ENCODE measurements at regions of chr11 and their contacts with region 1.

Region 1: DNA sequence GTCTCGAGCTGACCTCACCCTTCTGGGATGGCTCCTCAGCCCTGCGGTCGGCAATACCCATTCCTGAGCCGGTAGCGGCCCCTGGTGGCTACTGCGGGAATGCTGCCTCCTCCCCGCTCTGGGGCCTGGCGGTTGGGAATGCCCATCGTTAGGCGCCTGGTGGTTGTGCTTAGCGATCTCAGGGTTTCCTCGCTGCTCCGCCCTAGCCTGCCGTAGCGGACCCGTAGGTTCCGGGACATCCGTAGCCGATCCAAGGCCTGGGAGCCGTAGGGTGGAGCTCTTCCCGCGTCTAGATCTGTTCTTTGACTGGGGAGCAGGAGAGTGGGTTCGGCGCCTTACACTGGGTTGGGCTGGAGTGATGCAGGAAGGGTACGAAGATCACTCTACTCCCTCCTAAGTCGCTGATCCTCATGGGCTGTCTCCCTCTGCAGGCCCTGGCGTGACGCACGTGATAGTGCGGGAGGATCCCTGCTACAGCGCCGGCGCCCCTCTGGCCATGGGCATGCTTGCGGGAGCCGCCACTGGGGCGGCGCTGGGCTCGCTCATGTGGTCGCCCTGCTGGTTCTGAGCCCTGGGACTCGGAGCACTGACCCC is 14.8 kb downstream of the PLEKHB1 start:
- DNase-seq: peak; percentile 88
- ATAC-seq: peak; percentile 97
- H3K4me3 ChIP-seq: peak overlapping the region in 4 of 5 experiments; percentile 6 to 30 (median 22)
- H3K4me3 Mint-ChIP-seq: peak overlapping the region; percentile 68
- H3K27ac ChIP-seq: no peak overlapping the region
- H3K27ac Mint-ChIP-seq: no peak overlapping the region
- H3K4me1 ChIP-seq: peaks cover 9 to 10% of the 10 kb centered on the region in 2 donors
- H3K4me1 Mint-ChIP-seq: peaks cover 14% of the 10 kb centered on the region
- H3K27me3 ChIP-seq: peaks cover 0 to 13% (median 4%) of the 10 kb centered on the region in 4 experiments
- H3K27me3 Mint-ChIP-seq: peaks cover 7% of the 10 kb centered on the region
- CTCF ChIP-seq: peak; percentile 99

Region 2: GRCh38 chr11:73307323-73308002 is 353.7 kb before region 1 on chr11:
- CTCF ChIA-PET with region 1: interaction called, 10 read pairs
- POLR2A ChIA-PET with region 1: no interaction called
- intact Hi-C with region 1: loop called (anchors 1 kb)
- DNase-seq: peak; percentile 91
- ATAC-seq: peak; percentile 76
- H3K4me3 ChIP-seq: peak overlapping the region; percentile 51 to 84 (median 65)
- H3K4me3 Mint-ChIP-seq: peak overlapping the region; percentile 89
- H3K27ac ChIP-seq: no peak overlapping the region
- H3K27ac Mint-ChIP-seq: peak overlapping the region; percentile 51
- H3K4me1 ChIP-seq: peaks cover 20 to 25% of the 10 kb centered on the region in 2 donors
- H3K4me1 Mint-ChIP-seq: peaks cover 13% of the 10 kb centered on the region
- H3K27me3 ChIP-seq: peaks cover 0 to 52% (median 18%) of the 10 kb centered on the region in 4 experiments
- H3K27me3 Mint-ChIP-seq: peaks cover 24% of the 10 kb centered on the region
- CTCF ChIP-seq: peak; percentile 72

Region 3: GRCh38 chr11:73404048-73404447 is 257.1 kb before region 1 on chr11:
- CTCF ChIA-PET with region 1: interaction called, 15 read pairs
- POLR2A ChIA-PET with region 1: no interaction called
- intact Hi-C with region 1: loop called (anchors 1 kb)
- DNase-seq: peak; percentile 21
- ATAC-seq: no peak
- H3K4me3 ChIP-seq: no peak overlapping the region
- H3K4me3 Mint-ChIP-seq: no peak overlapping the region
- H3K27ac ChIP-seq: peak overlapping the region in 1 of 2 donors; percentile 37
- H3K27ac Mint-ChIP-seq: no peak overlapping the region
- H3K4me1 ChIP-seq: no peaks in the 10 kb centered on the region
- H3K4me1 Mint-ChIP-seq: peaks cover 2% of the 10 kb centered on the region
- H3K27me3 ChIP-seq: no peaks in the 10 kb centered on the region
- H3K27me3 Mint-ChIP-seq: no peaks in the 10 kb centered on the region
- CTCF ChIP-seq: no peak

Region 4: GRCh38 chr11:73554671-73555320 is 106.3 kb before region 1 on chr11:
- CTCF ChIA-PET with region 1: no interaction called
- POLR2A ChIA-PET with region 1: no interaction called
- intact Hi-C with region 1: no loop called
- DNase-seq: no peak
- ATAC-seq: no peak
- H3K4me3 ChIP-seq: no peak overlapping the region
- H3K4me3 Mint-ChIP-seq: no peak overlapping the region
- H3K27ac ChIP-seq: no peak overlapping the region
- H3K27ac Mint-ChIP-seq: no peak overlapping the region
- H3K4me1 ChIP-seq: peaks cover 0 to 4% of the 10 kb centered on the region in 2 donors
- H3K4me1 Mint-ChIP-seq: peaks cover 17% of the 10 kb centered on the region
- H3K27me3 ChIP-seq: no peaks in the 10 kb centered on the region
- H3K27me3 Mint-ChIP-seq: no peaks in the 10 kb centered on the region
- CTCF ChIP-seq: no peak

Region 5: DNA sequence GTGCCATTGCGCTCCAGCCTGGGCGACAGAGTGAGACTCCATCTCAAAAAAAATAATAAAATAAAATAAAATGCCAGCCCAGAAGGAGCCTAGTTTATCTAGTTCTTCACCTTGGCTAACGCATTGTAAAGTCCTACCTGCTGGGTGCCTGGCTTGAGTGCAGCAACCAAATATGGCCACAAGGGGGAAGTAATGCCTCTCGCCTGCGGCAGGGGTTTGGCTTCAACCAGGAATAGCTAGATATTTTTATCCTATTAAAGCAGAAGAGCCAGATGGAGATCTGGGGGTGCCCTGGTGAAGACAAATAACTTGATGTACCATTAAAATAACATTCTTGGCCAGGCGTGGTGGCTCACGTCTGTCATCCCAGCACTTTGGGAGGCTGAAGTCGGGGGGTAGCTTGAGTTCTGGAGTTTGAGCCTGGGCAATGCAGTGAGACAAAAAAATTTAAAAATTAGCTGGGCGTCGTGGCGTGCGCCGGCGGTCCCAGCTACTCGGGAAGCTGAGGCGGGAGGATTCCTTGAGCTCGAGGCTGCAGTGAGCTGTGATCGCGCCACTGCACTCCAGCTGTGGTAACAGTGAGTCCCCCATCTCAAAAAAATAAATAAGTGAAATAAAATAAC is 35.3 kb before region 1 on chr11:
- CTCF ChIA-PET with region 1: interaction called, 252 read pairs
- POLR2A ChIA-PET with region 1: no interaction called
- intact Hi-C with region 1: loop called (anchors 1 kb)
- DNase-seq: peak; percentile 75
- ATAC-seq: peak; percentile 89
- H3K4me3 ChIP-seq: no peak overlapping the region
- H3K4me3 Mint-ChIP-seq: no peak overlapping the region
- H3K27ac ChIP-seq: no peak overlapping the region
- H3K27ac Mint-ChIP-seq: no peak overlapping the region
- H3K4me1 ChIP-seq: peaks cover 7 to 14% of the 10 kb centered on the region in 2 donors
- H3K4me1 Mint-ChIP-seq: peaks cover 8% of the 10 kb centered on the region
- H3K27me3 ChIP-seq: peaks cover 0 to 11% (median 0%) of the 10 kb centered on the region in 4 experiments
- H3K27me3 Mint-ChIP-seq: peaks cover 6% of the 10 kb centered on the region
- CTCF ChIP-seq: peak; percentile 91

Region 6: DNA sequence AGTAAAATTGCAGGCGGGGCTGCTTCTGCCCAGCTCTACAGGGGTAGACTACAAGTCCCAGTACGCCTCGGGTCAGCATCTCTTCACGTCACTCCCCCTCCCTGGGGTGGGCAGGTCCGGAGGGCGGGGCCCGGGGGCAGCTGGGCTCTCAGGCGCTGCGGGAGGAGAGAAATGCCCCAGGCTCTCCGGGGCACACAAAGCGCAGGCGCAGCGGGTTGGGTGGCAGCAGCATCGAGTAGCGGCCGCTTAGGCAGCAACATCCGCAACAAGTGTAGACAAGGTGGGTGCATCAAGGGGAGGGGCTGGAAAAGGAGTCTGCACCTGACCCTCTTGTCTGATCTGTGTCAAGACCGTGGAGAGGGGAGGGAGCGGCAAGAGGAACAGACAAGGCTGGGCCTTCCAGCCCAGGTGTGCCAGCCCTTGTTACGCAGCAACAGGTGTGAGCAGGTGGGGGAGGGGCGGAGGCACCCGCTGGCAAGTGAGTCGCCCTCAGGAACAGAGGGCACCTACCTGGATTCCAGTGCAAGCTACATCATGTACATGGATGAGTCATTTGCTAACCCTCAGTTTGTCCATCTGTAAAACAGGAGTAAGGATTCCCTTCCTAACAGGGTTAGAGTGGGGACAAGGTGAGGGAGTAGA is 13.6 kb before region 1 on chr11:
- CTCF ChIA-PET with region 1: interaction called, 49 read pairs
- POLR2A ChIA-PET with region 1: interaction called, 4 read pairs
- intact Hi-C with region 1: loop called (anchors 1 kb)
- DNase-seq: peak; percentile 92
- ATAC-seq: peak; percentile 100
- H3K4me3 ChIP-seq: peak overlapping the region in 4 of 5 experiments; percentile 23 to 56 (median 48)
- H3K4me3 Mint-ChIP-seq: peak overlapping the region; percentile 87
- H3K27ac ChIP-seq: no peak overlapping the region
- H3K27ac Mint-ChIP-seq: peak overlapping the region; percentile 87
- H3K4me1 ChIP-seq: peaks cover 11 to 20% of the 10 kb centered on the region in 2 donors
- H3K4me1 Mint-ChIP-seq: peaks cover 23% of the 10 kb centered on the region
- H3K27me3 ChIP-seq: peaks cover 0 to 5% (median 0%) of the 10 kb centered on the region in 4 experiments
- H3K27me3 Mint-ChIP-seq: peaks cover 4% of the 10 kb centered on the region
- CTCF ChIP-seq: no peak

Region 7: GRCh38 chr11:73810637-73811036 is 149.5 kb after region 1 on chr11:
- CTCF ChIA-PET with region 1: no interaction called
- POLR2A ChIA-PET with region 1: no interaction called
- intact Hi-C with region 1: no loop called
- DNase-seq: no peak
- ATAC-seq: no peak
- H3K4me3 ChIP-seq: no peak overlapping the region
- H3K4me3 Mint-ChIP-seq: no peak overlapping the region
- H3K27ac ChIP-seq: no peak overlapping the region
- H3K27ac Mint-ChIP-seq: no peak overlapping the region
- H3K4me1 ChIP-seq: no peaks in the 10 kb centered on the region
- H3K4me1 Mint-ChIP-seq: no peaks in the 10 kb centered on the region
- H3K27me3 ChIP-seq: no peaks in the 10 kb centered on the region
- H3K27me3 Mint-ChIP-seq: no peaks in the 10 kb centered on the region
- CTCF ChIP-seq: no peak

Region 8: DNA sequence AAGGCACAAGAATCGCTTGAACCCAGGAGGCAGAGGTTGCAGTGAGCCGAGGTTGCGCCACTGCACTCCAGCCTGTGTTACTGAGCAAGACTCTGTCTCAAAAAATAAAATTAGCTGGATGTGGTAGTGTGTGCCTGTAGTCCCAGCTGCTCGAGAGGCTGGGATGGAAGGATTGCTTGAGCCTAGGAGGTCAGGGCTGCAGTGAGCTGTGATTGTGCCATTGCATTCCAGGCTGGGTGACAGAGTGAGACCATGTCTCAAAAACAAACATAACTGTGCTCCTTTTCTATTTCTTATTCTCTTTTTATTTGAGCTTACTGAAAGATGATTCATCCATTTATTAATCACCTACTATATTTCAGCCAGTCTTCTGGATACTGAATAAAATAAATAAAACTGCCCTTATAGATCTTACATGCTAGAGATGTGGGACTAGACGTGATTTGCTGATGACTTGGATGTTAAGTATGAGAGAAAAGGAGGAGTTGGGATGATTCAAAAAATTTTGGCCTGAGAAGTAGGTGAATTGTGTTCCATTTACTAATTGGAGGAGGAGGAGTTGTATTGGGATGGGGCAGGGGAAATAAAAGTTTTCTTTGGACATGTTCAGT is 233.7 kb after region 1 on chr11:
- CTCF ChIA-PET with region 1: no interaction called
- POLR2A ChIA-PET with region 1: no interaction called
- intact Hi-C with region 1: no loop called
- DNase-seq: no peak
- ATAC-seq: no peak
- H3K4me3 ChIP-seq: no peak overlapping the region
- H3K4me3 Mint-ChIP-seq: no peak overlapping the region
- H3K27ac ChIP-seq: no peak overlapping the region
- H3K27ac Mint-ChIP-seq: no peak overlapping the region
- H3K4me1 ChIP-seq: no peaks in the 10 kb centered on the region
- H3K4me1 Mint-ChIP-seq: no peaks in the 10 kb centered on the region
- H3K27me3 ChIP-seq: no peaks in the 10 kb centered on the region
- H3K27me3 Mint-ChIP-seq: no peaks in the 10 kb centered on the region
- CTCF ChIP-seq: no peak